IMR-90 (cell line): ENCODE measurements at regions of chr17 and their contacts with region 1.

Region 1: GRCh38 chr17:10640475-10640874 is 16.6 kb downstream of the MYH3 start:
- DNase-seq: no peak
- ATAC-seq: no peak
- H3K4me3 ChIP-seq: no peak overlapping the region
- H3K27ac ChIP-seq: no peak overlapping the region
- H3K4me1 ChIP-seq: no peaks in the 10 kb centered on the region
- H3K27me3 ChIP-seq: no peaks in the 10 kb centered on the region
- CTCF ChIP-seq: no peak
- POLR2A ChIP-seq: no peak
- RAD21 ChIP-seq: no peak

Region 2: DNA sequence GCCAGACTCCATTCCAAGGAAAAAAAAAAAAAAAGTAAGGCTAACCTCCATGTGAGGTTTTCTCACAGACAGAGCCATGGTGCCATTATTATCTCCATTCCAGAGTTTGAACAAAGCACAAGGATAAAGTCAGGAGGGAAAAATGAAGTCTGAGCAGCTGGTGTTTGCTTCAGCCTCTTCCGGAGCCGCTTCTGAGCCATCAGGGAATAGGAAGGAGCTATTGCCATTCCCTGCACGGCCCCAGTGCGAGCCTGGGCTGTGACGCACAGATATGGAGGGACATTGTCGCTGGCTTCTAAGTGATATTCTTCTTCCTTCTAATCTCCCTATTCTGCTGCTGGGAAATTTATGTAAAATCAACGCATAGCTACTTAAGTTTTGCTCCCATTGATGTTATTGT is 266.9 kb after region 1 on chr17:
- CTCF ChIA-PET with region 1: no interaction called
- POLR2A ChIA-PET with region 1: no interaction called
- dilution Hi-C with region 1: no loop called
- in situ Hi-C with region 1: no loop called
- intact Hi-C with region 1: no loop called
- DNase-seq: no peak
- ATAC-seq: no peak
- H3K4me3 ChIP-seq: no peak overlapping the region
- H3K27ac ChIP-seq: no peak overlapping the region
- H3K4me1 ChIP-seq: no peaks in the 10 kb centered on the region
- H3K27me3 ChIP-seq: no peaks in the 10 kb centered on the region
- CTCF ChIP-seq: no peak
- POLR2A ChIP-seq: no peak
- RAD21 ChIP-seq: no peak

Region 3: DNA sequence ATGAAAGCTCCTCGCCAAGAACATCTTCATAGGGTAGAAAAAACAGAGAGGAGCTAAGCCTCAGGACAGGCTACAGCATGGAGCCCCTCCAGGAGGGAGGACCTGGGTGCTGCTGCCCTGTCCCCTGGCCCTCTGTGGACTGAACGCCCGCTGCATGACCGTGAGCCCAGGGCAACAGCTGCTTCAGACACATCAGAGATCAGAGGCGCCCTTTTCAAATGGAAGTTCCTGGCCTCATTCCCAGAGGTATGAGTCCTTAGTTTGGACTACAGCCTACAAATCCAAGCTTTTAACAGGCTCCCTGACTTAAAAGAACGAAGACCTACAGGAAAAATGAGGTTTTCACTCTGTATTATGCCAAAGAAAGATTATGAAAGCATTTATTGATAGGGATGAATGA is 1308.3 kb after region 1 on chr17:
- CTCF ChIA-PET with region 1: no interaction called
- POLR2A ChIA-PET with region 1: interaction called, 11 read pairs
- dilution Hi-C with region 1: no loop called
- in situ Hi-C with region 1: no loop called
- intact Hi-C with region 1: no loop called
- DNase-seq: peak; percentile 86
- ATAC-seq: peak; percentile 98
- H3K4me3 ChIP-seq: peak overlapping the region; percentile 11; the same call in 1 of the 2 replicates
- H3K27ac ChIP-seq: no peak overlapping the region
- H3K4me1 ChIP-seq: no peaks in the 10 kb centered on the region
- H3K27me3 ChIP-seq: no peaks in the 10 kb centered on the region
- CTCF ChIP-seq: no peak
- POLR2A ChIP-seq: no peak
- RAD21 ChIP-seq: no peak